ENCODE measurements at regions of chr9 and their contacts with region 1.

Region 1: GRCh38 chr9:129110740-129111527 is at the starts of genes CRAT and PTPA:
- DNase-seq: peak; percentile 96
- ATAC-seq: peak; percentile 88
- H3K4me3 ChIP-seq: peak within 1 kb of the TSS; percentile 92 to 98 (median 95)
- H3K4me3 Mint-ChIP-seq: peak within 1 kb of the TSS; percentile 96
- H3K27ac ChIP-seq: peak within 1 kb of the TSS; percentile 81 to 85
- H3K27ac Mint-ChIP-seq: peak within 1 kb of the TSS; percentile 96
- H3K4me1 ChIP-seq: peaks cover 12 to 19% of the 10 kb centered on the region in 2 donors
- H3K4me1 Mint-ChIP-seq: peaks cover 25% of the 10 kb centered on the region
- H3K27me3 ChIP-seq: no peaks in the 10 kb centered on the region
- H3K27me3 Mint-ChIP-seq: no peaks in the 10 kb centered on the region
- CTCF ChIP-seq: no peak
- total RNA-seq, gene CRAT: 11.8 and 14.1 TPM in 2 replicates
- total RNA-seq, gene PTPA: 72.8 and 73.9 TPM in 2 replicates

Region 2: GRCh38 chr9:128677794-128678193 is 433.1 kb before region 1 on chr9:
- CTCF ChIA-PET with region 1: no interaction called
- POLR2A ChIA-PET with region 1: no interaction called
- intact Hi-C with region 1: no loop called
- DNase-seq: no peak
- ATAC-seq: no peak
- H3K4me3 ChIP-seq: no peak overlapping the region
- H3K4me3 Mint-ChIP-seq: no peak overlapping the region
- H3K27ac ChIP-seq: no peak overlapping the region
- H3K27ac Mint-ChIP-seq: no peak overlapping the region
- H3K4me1 ChIP-seq: peaks cover 4 to 16% of the 10 kb centered on the region in 2 donors
- H3K4me1 Mint-ChIP-seq: peaks cover 6% of the 10 kb centered on the region
- H3K27me3 ChIP-seq: no peaks in the 10 kb centered on the region
- H3K27me3 Mint-ChIP-seq: no peaks in the 10 kb centered on the region
- CTCF ChIP-seq: no peak

Region 3: DNA sequence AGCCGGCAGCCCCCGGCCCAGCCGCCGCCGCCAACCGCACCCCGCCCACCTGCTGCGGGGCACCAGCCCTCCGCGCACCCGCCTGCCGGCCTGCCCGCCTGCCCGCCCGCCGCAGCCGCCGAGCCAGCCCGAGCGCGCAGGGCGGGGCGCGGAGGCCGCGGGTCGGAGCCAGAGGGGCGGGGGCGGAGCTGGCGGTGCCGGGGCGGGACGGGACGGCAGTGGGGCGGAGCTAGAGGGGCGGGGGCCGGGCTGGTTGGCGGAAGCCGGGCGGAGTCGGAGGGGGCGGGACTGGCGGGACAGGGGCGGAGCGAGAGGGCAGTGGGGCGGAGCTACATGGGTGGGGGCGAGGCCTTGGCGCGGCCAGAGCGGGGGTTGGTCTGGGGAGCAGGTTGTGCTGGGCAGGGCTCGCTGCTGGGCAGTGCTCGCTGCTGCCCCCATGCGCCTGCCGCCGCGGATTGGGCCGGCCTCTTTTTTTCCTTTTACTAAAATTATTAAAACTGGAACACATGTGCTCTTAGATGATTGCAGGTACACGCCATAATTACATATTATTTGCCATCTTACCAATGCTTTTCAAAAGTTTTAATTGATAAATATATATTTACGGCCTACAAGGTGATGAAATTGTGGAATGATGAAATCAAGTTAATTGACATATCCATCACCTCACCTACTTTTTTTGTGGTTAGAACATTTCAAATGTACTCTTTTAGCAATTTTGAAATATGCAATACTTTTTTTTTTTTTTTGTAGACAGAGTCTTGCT is 82.6 kb before region 1 on chr9 and contains the start of gene SH3GLB2:
- CTCF ChIA-PET with region 1: no interaction called
- POLR2A ChIA-PET with region 1: no interaction called
- intact Hi-C with region 1: loop called (anchors 1 kb)
- DNase-seq: peak; percentile 93
- ATAC-seq: peak; percentile 96
- H3K4me3 ChIP-seq: peak within 1 kb of the TSS; percentile 11 to 76 (median 63)
- H3K4me3 Mint-ChIP-seq: peak within 1 kb of the TSS; percentile 89
- H3K27ac ChIP-seq: peak within 1 kb of the TSS in 1 of 2 donors; percentile 70
- H3K27ac Mint-ChIP-seq: peak within 1 kb of the TSS; percentile 84
- H3K4me1 ChIP-seq: peaks cover 11 to 16% of the 10 kb centered on the region in 2 donors
- H3K4me1 Mint-ChIP-seq: peaks cover 19% of the 10 kb centered on the region
- H3K27me3 ChIP-seq: no peaks in the 10 kb centered on the region
- H3K27me3 Mint-ChIP-seq: no peaks in the 10 kb centered on the region
- CTCF ChIP-seq: peak; percentile 21
- total RNA-seq, gene SH3GLB2: 110 and 111 TPM in 2 replicates

Region 4: GRCh38 chr9:129068990-129069861 is 41.7 kb before region 1 on chr9:
- CTCF ChIA-PET with region 1: no interaction called
- POLR2A ChIA-PET with region 1: interaction called, 3 read pairs
- intact Hi-C with region 1: loop called (anchors 1 kb)
- DNase-seq: peak; percentile 87
- ATAC-seq: peak; percentile 97
- H3K4me3 ChIP-seq: peak overlapping the region in 4 of 5 experiments; percentile 26 to 39 (median 38)
- H3K4me3 Mint-ChIP-seq: peak overlapping the region; percentile 83
- H3K27ac ChIP-seq: peak overlapping the region; percentile 77 to 79
- H3K27ac Mint-ChIP-seq: peak overlapping the region; percentile 97
- H3K4me1 ChIP-seq: peaks cover 25 to 37% of the 10 kb centered on the region in 2 donors
- H3K4me1 Mint-ChIP-seq: peaks cover 25% of the 10 kb centered on the region
- H3K27me3 ChIP-seq: no peaks in the 10 kb centered on the region
- H3K27me3 Mint-ChIP-seq: no peaks in the 10 kb centered on the region
- CTCF ChIP-seq: no peak

Region 5: GRCh38 chr9:129131300-129132145 is 20.6 kb after region 1 on chr9:
- CTCF ChIA-PET with region 1: interaction called, 11 read pairs
- POLR2A ChIA-PET with region 1: no interaction called
- intact Hi-C with region 1: no loop called
- DNase-seq: peak; percentile 85
- ATAC-seq: peak; percentile 99
- H3K4me3 ChIP-seq: no peak overlapping the region
- H3K4me3 Mint-ChIP-seq: no peak overlapping the region
- H3K27ac ChIP-seq: no peak overlapping the region
- H3K27ac Mint-ChIP-seq: peak overlapping the region; percentile 20
- H3K4me1 ChIP-seq: peaks cover 4 to 8% of the 10 kb centered on the region in 2 donors
- H3K4me1 Mint-ChIP-seq: peaks cover 5% of the 10 kb centered on the region
- H3K27me3 ChIP-seq: no peaks in the 10 kb centered on the region
- H3K27me3 Mint-ChIP-seq: no peaks in the 10 kb centered on the region
- CTCF ChIP-seq: peak; percentile 97

Region 6: GRCh38 chr9:129641746-129642513 is 531.0 kb after region 1 on chr9 and contains the start of gene ASB6:
- CTCF ChIA-PET with region 1: no interaction called
- POLR2A ChIA-PET with region 1: no interaction called
- intact Hi-C with region 1: loop called (anchors 1 kb)
- DNase-seq: peak; percentile 96
- ATAC-seq: peak; percentile 95
- H3K4me3 ChIP-seq: peak within 1 kb of the TSS; percentile 61 to 91 (median 84)
- H3K4me3 Mint-ChIP-seq: peak within 1 kb of the TSS; percentile 87
- H3K27ac ChIP-seq: peak within 1 kb of the TSS; percentile 54 to 86
- H3K27ac Mint-ChIP-seq: peak within 1 kb of the TSS; percentile 91
- H3K4me1 ChIP-seq: peaks cover 12 to 17% of the 10 kb centered on the region in 2 donors
- H3K4me1 Mint-ChIP-seq: peaks cover 26% of the 10 kb centered on the region
- H3K27me3 ChIP-seq: no peaks in the 10 kb centered on the region
- H3K27me3 Mint-ChIP-seq: no peaks in the 10 kb centered on the region
- CTCF ChIP-seq: peak; percentile 100
- total RNA-seq, gene ASB6: 24.8 and 27.7 TPM in 2 replicates

Region 7: DNA sequence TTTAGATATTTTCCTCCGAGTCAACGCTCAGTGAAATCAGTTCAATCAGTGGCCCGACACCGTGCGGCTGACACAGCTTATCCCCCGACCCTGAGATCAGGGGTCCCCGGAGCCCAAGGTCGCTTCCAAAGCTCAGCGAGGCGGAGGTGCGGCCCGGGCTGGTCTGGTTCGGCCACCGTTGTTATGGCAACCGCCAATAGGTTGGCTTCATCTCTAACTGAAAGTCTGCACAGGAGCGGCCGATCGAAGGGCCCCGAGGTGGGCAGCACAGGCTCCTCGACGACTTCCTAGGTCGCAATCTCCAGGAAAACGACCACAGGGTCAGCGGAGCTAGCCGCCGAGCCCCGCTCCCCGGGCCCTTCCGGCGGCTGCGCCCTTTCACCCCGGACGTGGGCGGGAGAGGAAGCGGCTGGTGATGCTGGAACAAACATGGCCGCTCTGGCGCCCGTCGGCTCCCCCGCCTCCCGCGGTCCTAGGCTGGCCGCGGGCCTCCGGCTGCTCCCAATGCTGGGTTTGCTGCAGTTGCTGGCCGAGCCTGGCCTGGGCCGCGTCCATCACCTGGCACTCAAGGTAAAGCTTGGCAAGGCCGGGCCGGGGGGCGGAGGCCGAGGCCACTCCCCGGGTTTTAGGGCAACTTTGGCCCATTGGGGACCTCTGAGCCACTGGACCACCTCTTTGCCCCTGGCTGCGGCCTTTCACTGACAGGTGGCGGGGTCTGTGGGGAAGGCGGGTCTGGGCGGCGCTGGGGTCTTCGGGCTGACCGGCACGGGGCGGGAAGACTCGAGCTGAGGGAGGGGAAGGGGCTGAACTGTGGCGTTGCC is 942.8 kb after region 1 on chr9 and contains the start of gene GPR107:
- CTCF ChIA-PET with region 1: no interaction called
- POLR2A ChIA-PET with region 1: no interaction called
- intact Hi-C with region 1: loop called (anchors 10 kb)
- DNase-seq: peak; percentile 87
- ATAC-seq: peak; percentile 97
- H3K4me3 ChIP-seq: peak within 1 kb of the TSS; percentile 78 to 96 (median 88)
- H3K4me3 Mint-ChIP-seq: peak within 1 kb of the TSS; percentile 91
- H3K27ac ChIP-seq: peak within 1 kb of the TSS; percentile 64 to 95
- H3K27ac Mint-ChIP-seq: peak within 1 kb of the TSS; percentile 88
- H3K4me1 ChIP-seq: peaks cover 14 to 20% of the 10 kb centered on the region in 2 donors
- H3K4me1 Mint-ChIP-seq: peaks cover 30% of the 10 kb centered on the region
- H3K27me3 ChIP-seq: no peaks in the 10 kb centered on the region
- H3K27me3 Mint-ChIP-seq: no peaks in the 10 kb centered on the region
- CTCF ChIP-seq: no peak
- total RNA-seq, gene GPR107: 26.8 and 28.1 TPM in 2 replicates

Measured in B cell (primary cell).